Lower lobe of right lung (tissue), 2 donors: ENCODE measurements at regions of chr13 and their contacts with region 1.

Region 1: DNA sequence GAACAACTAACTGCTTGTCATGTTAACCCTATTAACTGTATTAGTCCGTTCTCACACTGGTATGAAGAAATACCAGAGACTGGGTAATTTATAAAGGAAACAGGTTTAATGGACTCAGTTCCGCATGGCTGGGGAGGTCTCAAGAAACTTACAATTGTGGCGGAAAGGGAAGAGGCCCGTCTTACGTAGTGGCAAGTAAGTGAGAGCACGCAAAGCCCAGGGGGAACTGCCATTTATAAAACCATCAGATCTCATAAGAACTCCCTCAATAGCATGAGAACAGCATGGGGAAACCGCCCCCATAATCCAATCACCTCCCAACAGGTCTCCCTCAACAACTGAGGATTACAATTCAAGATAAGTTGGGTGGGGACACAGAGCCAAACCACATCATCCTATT is 34.7 kb downstream of the PHF11 start:
- DNase-seq: no peak
- ATAC-seq: peak in 1 of 2 donors; percentile 35
- H3K4me3 ChIP-seq: no peak overlapping the region
- H3K27ac ChIP-seq: no peak overlapping the region
- H3K4me1 ChIP-seq: no peaks in the 10 kb centered on the region
- H3K27me3 ChIP-seq: no peaks in the 10 kb centered on the region
- CTCF ChIP-seq: no peak

Region 2: GRCh38 chr13:49615836-49616675 is 85.6 kb after region 1 on chr13:
- intact Hi-C with region 1: loop called (anchors 5 kb)
- DNase-seq: no peak
- ATAC-seq: no peak
- H3K4me3 ChIP-seq: no peak overlapping the region
- H3K27ac ChIP-seq: peak overlapping the region; percentile 7
- H3K4me1 ChIP-seq: peaks cover 14% of the 10 kb centered on the region
- H3K27me3 ChIP-seq: no peaks in the 10 kb centered on the region
- CTCF ChIP-seq: no peak